Ovary (tissue), 10 donors: ENCODE measurements at regions of chr2 and their contacts with region 1.

Region 1: GRCh38 chr2:120174963-120175581 is 48.1 kb downstream of the TMEM185B start:
- DNase-seq: peak in 1 of 5 donors; percentile 30
- H3K4me3 ChIP-seq: no peak overlapping the region
- H3K27ac ChIP-seq: peak overlapping the region in 1 of 2 donors; percentile 47
- H3K4me1 ChIP-seq: no peaks in the 10 kb centered on the region
- H3K27me3 ChIP-seq: no peaks in the 10 kb centered on the region
- CTCF ChIP-seq: peak; percentile 18 to 66 (median 64)
- EP300 ChIP-seq: no peak
- POLR2A ChIP-seq: no peak

Region 2: DNA sequence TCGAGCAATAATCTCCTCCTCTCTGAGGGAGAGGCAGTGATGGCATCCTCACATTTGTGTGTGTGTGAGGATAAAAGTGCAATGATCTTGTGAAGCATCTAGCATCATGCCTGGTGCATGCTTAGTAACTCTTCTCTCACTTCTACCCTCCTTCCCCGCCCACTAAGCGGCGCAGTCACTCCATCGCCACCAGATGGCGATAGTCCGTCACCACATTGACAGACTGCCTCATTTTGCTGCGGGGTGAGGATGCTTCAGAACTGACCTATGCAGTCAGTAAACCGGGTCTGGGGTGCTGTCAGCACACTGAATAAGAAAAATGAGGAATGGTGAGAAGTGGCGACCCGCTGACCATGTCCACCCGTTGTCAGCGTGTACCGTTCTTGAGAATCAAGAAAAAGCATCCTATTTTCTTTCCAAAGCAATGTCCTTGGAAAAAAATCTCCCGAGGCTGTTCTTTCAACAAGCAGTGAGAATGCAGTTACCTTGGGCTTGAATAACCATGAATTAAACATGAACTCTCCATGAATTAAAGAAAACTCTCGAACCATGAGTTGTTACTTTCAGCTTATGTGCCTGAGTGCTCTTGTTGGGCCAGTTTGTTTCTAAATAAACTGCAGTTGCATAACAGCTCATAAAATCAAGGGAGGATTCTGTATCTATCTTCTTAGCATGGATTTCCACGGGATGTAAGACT is 533.4 kb before region 1 on chr2:
- intact Hi-C with region 1: loop called in 2 of 4 experiments (anchors 5 to 10 kb)
- DNase-seq: peak; percentile 63 to 80 (median 73)
- H3K4me3 ChIP-seq: no peak overlapping the region
- H3K27ac ChIP-seq: no peak overlapping the region
- H3K4me1 ChIP-seq: no peaks in the 10 kb centered on the region
- H3K27me3 ChIP-seq: no peaks in the 10 kb centered on the region
- CTCF ChIP-seq: peak; percentile 72 to 85 (median 73)
- EP300 ChIP-seq: no peak
- POLR2A ChIP-seq: no peak

Region 3: GRCh38 chr2:119702918-119703401 is 472.1 kb before region 1 on chr2:
- intact Hi-C with region 1: loop called in 2 of 4 experiments (anchors 5 to 10 kb)
- DNase-seq: peak; percentile 44 to 78 (median 69)
- H3K4me3 ChIP-seq: no peak overlapping the region
- H3K27ac ChIP-seq: no peak overlapping the region
- H3K4me1 ChIP-seq: no peaks in the 10 kb centered on the region
- H3K27me3 ChIP-seq: no peaks in the 10 kb centered on the region
- CTCF ChIP-seq: peak; percentile 74 to 86 (median 79)
- EP300 ChIP-seq: no peak
- POLR2A ChIP-seq: no peak

Region 4: DNA sequence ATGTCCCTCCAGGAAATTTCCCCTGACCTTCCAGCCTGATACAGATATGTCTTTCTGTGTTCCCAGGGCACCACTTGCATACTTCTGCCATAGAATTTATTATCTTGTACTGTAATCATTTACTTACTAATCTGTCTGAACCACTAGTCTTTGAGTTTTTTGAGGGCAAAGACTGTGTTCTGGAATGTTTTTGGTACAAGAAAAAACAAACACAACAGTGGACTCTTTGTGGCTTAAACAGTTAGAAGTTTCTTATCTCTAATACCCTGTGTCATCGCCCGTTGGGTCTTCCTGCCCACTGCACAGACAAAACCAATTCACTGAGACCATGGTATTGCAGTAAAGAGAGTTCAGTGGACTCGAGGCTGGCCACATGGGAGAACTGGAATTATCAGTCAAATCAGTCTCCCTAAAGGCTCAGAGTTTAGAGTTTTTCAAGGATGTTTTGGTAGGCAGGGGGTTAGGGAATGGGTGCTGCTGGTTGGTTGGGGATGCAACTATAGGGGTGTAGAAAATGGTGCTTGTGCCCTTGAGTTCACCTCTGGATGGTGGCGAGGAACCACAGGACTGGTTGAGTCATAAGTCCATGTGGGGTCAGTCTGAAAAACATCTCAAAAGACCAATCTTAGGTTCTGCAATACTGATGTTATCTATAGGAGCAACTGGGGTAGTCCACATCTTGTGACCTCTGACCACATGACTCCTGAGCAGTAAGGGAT is 97.8 kb after region 1 on chr2:
- intact Hi-C with region 1: no loop called
- DNase-seq: no peak
- H3K4me3 ChIP-seq: no peak overlapping the region
- H3K27ac ChIP-seq: no peak overlapping the region
- H3K4me1 ChIP-seq: no peaks in the 10 kb centered on the region
- H3K27me3 ChIP-seq: no peaks in the 10 kb centered on the region
- CTCF ChIP-seq: no peak
- EP300 ChIP-seq: no peak
- POLR2A ChIP-seq: no peak

Region 5: GRCh38 chr2:120312861-120313694 is 138.0 kb after region 1 on chr2:
- intact Hi-C with region 1: loop called in 1 of 4 experiments (anchors 5 kb)
- DNase-seq: peak; percentile 80 to 88 (median 87)
- H3K4me3 ChIP-seq: peak overlapping the region; percentile 47
- H3K27ac ChIP-seq: peak overlapping the region in 1 of 2 donors; percentile 75
- H3K4me1 ChIP-seq: peaks cover 3% of the 10 kb centered on the region
- H3K27me3 ChIP-seq: no peaks in the 10 kb centered on the region
- CTCF ChIP-seq: peak; percentile 75 to 87 (median 86)
- EP300 ChIP-seq: no peak
- POLR2A ChIP-seq: peak; percentile 19